ENCODE measurements at regions of chr9 and their contacts with region 1.

Region 1: GRCh38 chr9:107489687-107490605 is at the start of gene KLF4:
- DNase-seq: peak; percentile 73 to 84
- H3K4me3 ChIP-seq: peak within 1 kb of the TSS; percentile 50 to 69 (median 60)
- H3K27ac ChIP-seq: 0 out of 2 replicates have a peak within 1 kb of the TSS, but pooled peaks have one; percentile 55
- H3K4me1 ChIP-seq: peaks cover 0 to 22% (median 13%) of the 10 kb centered on the region in 4 experiments; a peak in 6 of 7 replicates
- H3K27me3 ChIP-seq: peaks cover 21 to 55% (median 48%) of the 10 kb centered on the region in 4 experiments
- CTCF ChIP-seq: no peak
- EP300 ChIP-seq: no peak
- POLR2A ChIP-seq: no peak; a peak in 2 of 3 replicates
- RAD21 ChIP-seq: no peak; a peak in 1 of 4 replicates
- total RNA-seq, gene KLF4: 2.8 and 3.1 TPM in 2 replicates

Region 2: GRCh38 chr9:107453479-107453878 is 36.5 kb before region 1 on chr9:
- CTCF ChIA-PET with region 1: no interaction called
- POLR2A ChIA-PET with region 1: no interaction called
- DNase-seq: no peak
- H3K4me3 ChIP-seq: no peak overlapping the region
- H3K27ac ChIP-seq: no peak overlapping the region
- H3K4me1 ChIP-seq: no peaks in the 10 kb centered on the region
- H3K27me3 ChIP-seq: no peaks in the 10 kb centered on the region
- CTCF ChIP-seq: no peak
- EP300 ChIP-seq: no peak
- POLR2A ChIP-seq: no peak
- RAD21 ChIP-seq: no peak

Region 3: DNA sequence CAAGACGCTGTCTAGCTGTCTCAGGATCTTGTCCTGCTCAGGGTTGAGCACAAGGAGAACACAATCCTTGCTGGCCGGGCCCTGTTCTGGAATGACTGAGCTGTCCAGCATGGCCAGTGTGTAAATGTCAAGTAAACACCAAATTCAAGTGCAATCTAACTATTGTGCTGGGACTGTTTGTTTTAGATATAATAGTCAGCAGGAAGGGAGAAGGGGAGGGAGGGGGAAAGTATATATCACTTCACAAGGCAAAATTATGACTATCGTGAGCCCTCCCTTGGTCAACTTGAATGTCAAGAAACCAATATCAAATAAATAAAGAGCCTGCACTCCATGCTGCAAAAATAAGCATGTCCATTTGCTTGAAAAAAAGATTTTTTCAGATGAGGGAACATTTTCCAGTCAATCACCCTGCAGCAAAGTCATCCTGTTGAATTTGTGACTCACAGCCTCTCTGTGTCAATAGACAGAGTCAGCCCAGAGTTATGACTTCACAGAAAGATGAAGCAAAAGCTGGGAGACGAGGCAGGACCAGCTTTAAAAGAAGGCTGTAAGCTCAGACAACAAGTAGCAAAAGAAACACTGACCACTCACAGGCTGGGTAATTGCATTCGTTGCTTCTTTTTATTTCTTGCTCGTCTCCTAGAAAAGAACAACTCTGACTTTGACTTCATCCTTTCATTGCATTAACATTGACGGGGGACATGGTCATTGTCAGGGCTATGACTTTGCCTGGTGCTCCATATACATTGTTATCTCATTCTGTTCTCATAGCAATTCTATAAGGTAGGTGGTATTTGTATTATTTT is 14.8 kb after region 1 on chr9:
- CTCF ChIA-PET with region 1: interaction called, 11 read pairs
- POLR2A ChIA-PET with region 1: no interaction called
- DNase-seq: no peak
- H3K4me3 ChIP-seq: no peak overlapping the region
- H3K27ac ChIP-seq: no peak overlapping the region
- H3K4me1 ChIP-seq: no peaks in the 10 kb centered on the region
- H3K27me3 ChIP-seq: no peaks in the 10 kb centered on the region
- CTCF ChIP-seq: no peak
- EP300 ChIP-seq: no peak
- POLR2A ChIP-seq: no peak
- RAD21 ChIP-seq: no peak

Region 4: GRCh38 chr9:107548048-107548800 is 58.3 kb after region 1 on chr9:
- CTCF ChIA-PET with region 1: no interaction called
- POLR2A ChIA-PET with region 1: no interaction called
- DNase-seq: no peak
- H3K4me3 ChIP-seq: no peak overlapping the region
- H3K27ac ChIP-seq: no peak overlapping the region
- H3K4me1 ChIP-seq: peaks cover 0 to 3% (median 0%) of the 10 kb centered on the region in 4 experiments; a peak in 3 of 7 replicates
- H3K27me3 ChIP-seq: no peaks in the 10 kb centered on the region
- CTCF ChIP-seq: no peak
- EP300 ChIP-seq: no peak
- POLR2A ChIP-seq: no peak
- RAD21 ChIP-seq: no peak

Region 5: DNA sequence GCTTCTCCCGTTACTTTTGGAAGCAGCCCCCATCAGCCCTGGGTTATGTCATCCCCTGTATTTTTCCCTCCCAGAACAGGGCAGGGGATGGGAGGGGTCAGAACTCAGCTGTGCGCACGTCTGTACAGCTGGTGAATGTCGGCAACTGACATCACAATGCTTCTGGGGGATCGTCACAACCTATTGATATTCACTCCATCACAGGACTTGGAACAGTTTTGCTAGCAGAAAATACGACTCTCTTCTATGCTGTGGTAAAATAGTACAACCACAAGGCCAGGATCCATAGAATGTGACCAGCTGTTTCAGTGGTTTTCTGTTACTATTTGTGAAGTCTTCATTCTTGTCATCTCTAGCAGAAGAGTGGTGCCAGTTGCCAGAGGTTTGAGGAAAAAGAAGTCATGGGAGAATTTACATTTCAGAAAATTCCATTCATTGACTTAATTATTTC is 76.7 kb after region 1 on chr9:
- CTCF ChIA-PET with region 1: no interaction called
- POLR2A ChIA-PET with region 1: no interaction called
- DNase-seq: no peak
- H3K4me3 ChIP-seq: no peak overlapping the region
- H3K27ac ChIP-seq: no peak overlapping the region
- H3K4me1 ChIP-seq: no peaks in the 10 kb centered on the region; a peak in 1 of 7 replicates
- H3K27me3 ChIP-seq: no peaks in the 10 kb centered on the region
- CTCF ChIP-seq: no peak
- EP300 ChIP-seq: no peak
- POLR2A ChIP-seq: no peak
- RAD21 ChIP-seq: no peak

Measured in H1 (cell line).